Mammary epithelial cell (primary cell): ENCODE measurements at regions of chr9 and their contacts with region 1.

Region 1: GRCh38 chr9:17116400-17116837 is 18.4 kb upstream of the CNTLN start:
- DNase-seq: peak; percentile 30
- H3K4me3 ChIP-seq: no peak overlapping the region
- H3K27ac ChIP-seq: no peak overlapping the region
- H3K4me1 ChIP-seq: no peaks in the 10 kb centered on the region
- H3K27me3 ChIP-seq: no peaks in the 10 kb centered on the region
- CTCF ChIP-seq: peak; percentile 41 to 47

Region 2: DNA sequence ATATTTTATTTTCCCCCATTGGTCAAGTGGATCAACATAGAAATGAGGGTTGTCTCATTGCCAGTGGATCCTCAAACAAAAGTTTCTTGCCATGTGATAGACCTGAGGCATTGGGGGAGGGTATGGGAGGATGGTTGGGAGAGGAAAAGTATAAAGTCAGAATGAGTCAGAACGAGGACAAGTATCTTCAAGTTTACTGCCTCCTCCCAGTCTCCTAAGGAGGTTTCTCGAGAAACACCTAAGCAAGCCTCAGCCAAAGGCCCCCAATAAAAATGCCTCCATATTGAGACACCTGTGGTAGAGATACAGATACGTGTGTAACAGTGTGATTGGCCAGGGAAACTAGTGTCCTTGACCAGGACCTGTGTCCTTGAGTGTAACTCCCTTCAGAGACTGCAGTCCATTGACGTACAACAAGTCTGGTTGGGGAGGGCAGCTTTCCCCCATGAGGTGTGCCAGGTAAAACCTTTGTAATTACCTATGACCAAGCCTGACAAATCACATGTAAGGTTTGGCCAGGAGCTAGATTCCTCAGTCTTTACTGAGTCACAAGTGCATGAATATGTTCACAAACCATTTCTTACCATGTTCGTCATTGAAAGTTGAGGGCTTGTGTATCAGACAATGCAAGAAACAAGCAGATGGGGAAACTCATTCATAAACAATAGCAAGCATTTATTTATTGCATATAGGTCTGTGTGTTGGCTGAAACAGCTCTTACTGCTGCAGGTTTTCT is 263.9 kb after region 1 on chr9:
- CTCF ChIA-PET with region 1: no interaction called
- dilution Hi-C with region 1: no loop called
- in situ Hi-C with region 1: no loop called
- intact Hi-C with region 1: no loop called
- DNase-seq: peak; percentile 28
- H3K4me3 ChIP-seq: no peak overlapping the region
- H3K27ac ChIP-seq: no peak overlapping the region
- H3K4me1 ChIP-seq: no peaks in the 10 kb centered on the region
- H3K27me3 ChIP-seq: no peaks in the 10 kb centered on the region
- CTCF ChIP-seq: no peak

Region 3: DNA sequence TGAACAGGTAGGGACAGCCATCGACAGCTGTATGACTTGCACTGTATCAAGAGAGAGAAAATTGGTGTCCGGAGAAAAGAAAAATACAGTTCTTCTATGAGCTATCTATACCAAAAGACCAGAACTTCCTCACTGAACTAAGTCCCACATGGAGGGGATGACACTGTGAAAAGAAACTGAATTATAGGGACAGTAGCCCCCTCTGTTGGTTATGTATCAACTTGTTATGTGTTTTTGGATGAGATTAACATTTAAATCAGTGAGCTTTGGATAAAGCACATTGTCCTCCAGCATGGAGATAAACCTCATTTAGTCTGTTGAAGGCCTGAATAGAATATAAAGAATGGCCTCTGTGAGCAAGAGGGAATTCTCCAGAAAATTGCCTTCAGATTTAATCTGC is 285.9 kb after region 1 on chr9:
- CTCF ChIA-PET with region 1: no interaction called
- dilution Hi-C with region 1: no loop called
- in situ Hi-C with region 1: no loop called
- intact Hi-C with region 1: loop called (anchors 5 kb)
- DNase-seq: no peak
- H3K4me3 ChIP-seq: no peak overlapping the region
- H3K27ac ChIP-seq: no peak overlapping the region
- H3K4me1 ChIP-seq: no peaks in the 10 kb centered on the region
- H3K27me3 ChIP-seq: no peaks in the 10 kb centered on the region
- CTCF ChIP-seq: no peak

Region 4: DNA sequence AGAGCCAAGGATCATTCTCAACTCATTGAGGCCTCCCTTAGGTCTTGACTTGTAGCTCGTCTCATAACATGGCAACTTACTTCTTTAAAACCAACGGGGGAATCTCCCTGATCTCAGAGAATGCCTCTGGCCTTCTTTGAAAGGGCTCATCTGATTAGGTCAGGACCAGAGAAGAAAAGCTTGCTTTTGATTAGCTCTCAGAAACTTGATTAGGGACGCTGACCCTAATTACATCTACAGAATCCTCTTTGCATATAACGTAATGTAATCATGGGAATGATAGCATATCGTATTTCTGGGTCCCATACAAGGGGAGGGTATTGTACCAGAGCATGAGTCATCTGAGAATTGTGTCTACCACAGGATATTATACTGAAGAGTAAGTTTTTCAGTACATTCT is 337.3 kb after region 1 on chr9:
- CTCF ChIA-PET with region 1: no interaction called
- dilution Hi-C with region 1: no loop called
- in situ Hi-C with region 1: loop called (anchors 10 to 25 kb)
- intact Hi-C with region 1: no loop called
- DNase-seq: no peak
- H3K4me3 ChIP-seq: no peak overlapping the region
- H3K27ac ChIP-seq: no peak overlapping the region
- H3K4me1 ChIP-seq: no peaks in the 10 kb centered on the region
- H3K27me3 ChIP-seq: no peaks in the 10 kb centered on the region
- CTCF ChIP-seq: no peak